ENCODE measurements at regions of chr6 and their contacts with region 1.

Region 1: DNA sequence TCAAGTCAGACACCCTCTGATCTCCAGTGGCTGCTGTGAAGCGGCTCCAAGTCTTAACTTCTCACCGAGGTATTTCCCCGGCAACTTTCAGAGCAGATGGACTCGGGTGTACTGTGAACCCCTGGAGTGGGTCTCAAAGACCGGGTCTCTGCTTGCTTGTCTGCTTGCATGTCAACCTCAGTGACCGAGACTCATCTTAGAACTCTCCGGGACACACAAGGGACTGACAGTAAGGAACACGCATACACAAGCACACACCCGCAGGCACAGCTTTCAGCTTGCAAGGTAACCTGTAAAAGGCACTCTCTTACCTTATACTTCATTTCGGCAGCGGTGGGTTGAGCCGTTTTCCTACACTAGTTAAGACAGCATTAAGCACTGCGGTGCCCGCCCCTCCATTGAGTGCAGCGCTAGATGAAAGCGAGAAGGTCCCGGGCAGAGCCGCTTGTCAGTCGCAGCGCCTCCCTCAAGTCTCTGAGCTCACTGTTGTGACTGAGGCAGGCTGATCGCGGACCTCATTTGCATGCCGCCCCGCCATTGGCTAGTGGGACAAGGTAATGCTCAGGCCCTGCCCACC is at the start of gene NEDD9:
- DNase-seq: peak; percentile 98
- H3K4me3 Mint-ChIP-seq: peak within 1 kb of the TSS; percentile 85
- H3K27ac Mint-ChIP-seq: peak within 1 kb of the TSS; percentile 97
- H3K4me1 Mint-ChIP-seq: peaks cover 64% of the 10 kb centered on the region
- H3K27me3 Mint-ChIP-seq: no peaks in the 10 kb centered on the region
- total RNA-seq, gene NEDD9: 31.9 and 36.9 TPM in 2 replicates

Region 2: GRCh38 chr6:10747251-10747972 is 484.9 kb before region 1 on chr6 and contains the start of gene TMEM14B:
- intact Hi-C with region 1: loop called (anchors 10 kb)
- DNase-seq: peak; percentile 100
- H3K4me3 Mint-ChIP-seq: peak within 1 kb of the TSS; percentile 90
- H3K27ac Mint-ChIP-seq: peak within 1 kb of the TSS; percentile 88
- H3K4me1 Mint-ChIP-seq: peaks cover 43% of the 10 kb centered on the region
- H3K27me3 Mint-ChIP-seq: no peaks in the 10 kb centered on the region
- total RNA-seq, gene TMEM14B: 94.0 and 98.0 TPM in 2 replicates

Region 3: DNA sequence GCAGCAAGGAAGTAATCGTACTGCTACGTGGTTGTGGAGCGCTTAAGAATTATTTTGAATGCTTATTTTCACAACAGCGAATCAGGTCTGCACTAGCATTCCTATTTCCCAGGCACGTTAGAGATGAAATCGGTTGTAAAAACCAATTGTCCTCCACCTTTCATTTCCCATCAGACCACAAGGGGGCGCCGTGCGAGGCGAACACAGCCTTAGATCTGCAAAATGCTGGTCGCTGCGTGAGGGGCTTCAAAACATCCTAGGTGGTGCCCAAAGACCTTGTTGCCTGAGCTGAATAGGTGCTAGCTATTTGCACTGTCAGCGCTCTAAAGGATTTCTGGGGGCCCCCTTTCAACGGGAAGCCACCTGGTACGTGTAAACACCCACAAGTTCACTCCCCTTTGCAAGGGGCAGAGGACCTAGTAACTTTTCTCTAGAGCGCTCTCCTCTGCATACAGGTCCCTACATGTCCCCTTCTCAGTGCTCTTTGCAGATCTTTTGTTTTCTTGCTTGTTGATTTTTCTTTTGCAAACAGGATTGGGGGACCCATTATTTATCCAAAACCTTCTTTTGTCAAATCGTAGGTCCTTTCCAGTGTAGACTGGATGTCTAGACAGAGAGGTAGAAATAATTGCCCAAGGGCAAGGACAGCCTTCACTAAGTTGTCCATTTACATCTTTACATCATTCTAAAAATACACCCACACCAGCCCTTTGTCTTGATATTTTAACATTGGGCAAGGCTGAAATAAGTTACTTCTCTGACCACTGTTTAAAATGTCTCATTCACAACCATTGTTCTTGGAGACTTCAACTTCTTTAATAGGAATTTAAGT is 59.6 kb before region 1 on chr6:
- intact Hi-C with region 1: loop called (anchors 2 kb)
- DNase-seq: peak; percentile 92
- H3K4me3 Mint-ChIP-seq: peak overlapping the region; percentile 32
- H3K27ac Mint-ChIP-seq: peak overlapping the region; percentile 21
- H3K4me1 Mint-ChIP-seq: peaks cover 21% of the 10 kb centered on the region
- H3K27me3 Mint-ChIP-seq: no peaks in the 10 kb centered on the region

Region 4: GRCh38 chr6:11277275-11278206 is 45.3 kb after region 1 on chr6:
- intact Hi-C with region 1: loop called (anchors 1 kb)
- DNase-seq: no peak
- H3K4me3 Mint-ChIP-seq: peak overlapping the region; percentile 31
- H3K27ac Mint-ChIP-seq: peak overlapping the region; percentile 89
- H3K4me1 Mint-ChIP-seq: peaks cover 37% of the 10 kb centered on the region
- H3K27me3 Mint-ChIP-seq: no peaks in the 10 kb centered on the region

Region 5: GRCh38 chr6:11366183-11366933 is 134.1 kb after region 1 on chr6:
- intact Hi-C with region 1: loop called (anchors 1 kb)
- DNase-seq: peak; percentile 86
- H3K4me3 Mint-ChIP-seq: peak overlapping the region; percentile 62
- H3K27ac Mint-ChIP-seq: peak overlapping the region; percentile 86
- H3K4me1 Mint-ChIP-seq: peaks cover 78% of the 10 kb centered on the region
- H3K27me3 Mint-ChIP-seq: no peaks in the 10 kb centered on the region

Region 6: GRCh38 chr6:11414176-11414963 is 182.1 kb after region 1 on chr6:
- intact Hi-C with region 1: loop called (anchors 2 kb)
- DNase-seq: peak; percentile 78
- H3K4me3 Mint-ChIP-seq: no peak overlapping the region
- H3K27ac Mint-ChIP-seq: peak overlapping the region; percentile 41
- H3K4me1 Mint-ChIP-seq: peaks cover 44% of the 10 kb centered on the region
- H3K27me3 Mint-ChIP-seq: no peaks in the 10 kb centered on the region

Region 7: GRCh38 chr6:11496152-11497060 is 264.1 kb after region 1 on chr6:
- intact Hi-C with region 1: loop called (anchors 10 kb)
- DNase-seq: peak; percentile 93
- H3K4me3 Mint-ChIP-seq: no peak overlapping the region
- H3K27ac Mint-ChIP-seq: no peak overlapping the region
- H3K4me1 Mint-ChIP-seq: peaks cover 10% of the 10 kb centered on the region
- H3K27me3 Mint-ChIP-seq: no peaks in the 10 kb centered on the region

Measured in activated CD4-positive, alpha-beta T cell treated with anti-CD3 and anti-CD28 coated beads, Interleukin-2, amount 10 ng/mL, durations not matched to agents 24 days and 14 days (primary cell).